A549 (cell line): ENCODE measurements at regions of chr15 and their contacts with region 1.

Region 1: DNA sequence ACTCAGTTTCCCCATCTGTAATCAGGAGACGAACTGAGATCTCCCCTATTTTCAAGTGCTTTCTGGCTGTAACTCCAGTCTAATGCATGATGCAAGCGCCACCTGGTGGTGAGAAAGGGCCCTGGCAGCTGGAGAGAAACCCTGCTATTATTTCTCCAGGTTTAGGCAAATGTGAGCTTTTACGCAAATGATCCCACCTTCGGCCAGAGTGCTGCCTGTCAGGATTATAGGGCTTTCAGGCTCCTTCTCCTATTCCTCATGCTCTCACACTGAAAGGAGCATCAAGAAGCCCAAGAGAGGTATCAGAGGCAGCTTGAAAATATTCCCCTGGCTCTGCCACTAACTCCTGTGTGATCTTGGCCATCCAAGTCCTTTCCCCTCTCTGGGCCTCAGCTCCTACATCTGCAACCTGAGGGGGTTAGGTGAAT is 93.9 kb upstream of the RASGRF1 start:
- DNase-seq: peak; percentile 68 to 76
- ATAC-seq: peak; percentile 88 to 91
- H3K4me3 ChIP-seq: no peak overlapping the region
- H3K27ac ChIP-seq: no peak overlapping the region
- H3K4me1 ChIP-seq: peaks cover 2% of the 10 kb centered on the region
- CTCF ChIP-seq: peak; percentile 99
- EP300 ChIP-seq: no peak
- POLR2A ChIP-seq: no peak
- RAD21 ChIP-seq: peak; percentile 96 to 99

Region 2: DNA sequence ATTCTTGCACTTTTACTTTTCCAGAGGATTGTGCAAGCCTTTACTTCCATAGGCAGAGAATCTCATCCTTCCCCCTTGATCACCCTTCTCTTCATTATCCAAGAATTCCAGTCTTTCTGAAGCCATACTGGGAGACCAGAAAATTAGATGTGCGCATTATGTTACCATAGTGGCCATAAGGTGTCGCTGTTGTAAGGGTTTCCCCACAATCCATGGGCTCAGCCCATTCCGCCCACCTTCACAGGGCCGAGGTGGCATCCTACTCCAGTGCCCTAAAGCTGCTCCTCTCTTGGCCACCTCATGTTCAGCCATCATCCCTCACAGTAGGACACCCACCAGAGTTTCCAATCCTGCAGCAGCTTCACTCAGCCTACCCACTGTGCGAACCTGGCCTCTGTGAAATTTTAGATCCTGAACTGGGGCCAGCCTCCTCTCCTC is 274.7 kb before region 1 on chr15:
- CTCF ChIA-PET with region 1: interaction called, 150 read pairs
- POLR2A ChIA-PET with region 1: no interaction called
- DNase-seq: peak; percentile 63 to 72
- ATAC-seq: peak; percentile 63 to 83
- H3K4me3 ChIP-seq: no peak overlapping the region
- H3K27ac ChIP-seq: no peak overlapping the region
- H3K4me1 ChIP-seq: peaks cover 21% of the 10 kb centered on the region
- CTCF ChIP-seq: peak; percentile 87
- EP300 ChIP-seq: no peak
- POLR2A ChIP-seq: no peak
- RAD21 ChIP-seq: peak; percentile 75 to 81

Region 3: GRCh38 chr15:78979456-78980320 is 204.8 kb before region 1 on chr15:
- CTCF ChIA-PET with region 1: interaction called, 25 read pairs
- POLR2A ChIA-PET with region 1: no interaction called
- DNase-seq: peak; percentile 92 to 93
- ATAC-seq: peak; percentile 80 to 94
- H3K4me3 ChIP-seq: no peak overlapping the region
- H3K27ac ChIP-seq: peak overlapping the region; percentile 59 to 80
- H3K4me1 ChIP-seq: peaks cover 5% of the 10 kb centered on the region; the same call in 2 of the 3 replicates
- CTCF ChIP-seq: peak; percentile 90
- EP300 ChIP-seq: no peak
- POLR2A ChIP-seq: no peak
- RAD21 ChIP-seq: peak; percentile 78 to 81

Region 4: GRCh38 chr15:79028411-79028964 is 156.0 kb before region 1 on chr15:
- CTCF ChIA-PET with region 1: interaction called, 518 read pairs
- POLR2A ChIA-PET with region 1: interaction called, 5 read pairs
- DNase-seq: peak; percentile 51 to 54
- ATAC-seq: peak in 1 of 2 experiments; percentile 77; a peak in 3 of 6 replicates
- H3K4me3 ChIP-seq: no peak overlapping the region
- H3K27ac ChIP-seq: no peak overlapping the region
- H3K4me1 ChIP-seq: no peaks in the 10 kb centered on the region
- CTCF ChIP-seq: peak; percentile 92
- EP300 ChIP-seq: no peak
- POLR2A ChIP-seq: no peak
- RAD21 ChIP-seq: peak; percentile 92 to 98

Region 5: DNA sequence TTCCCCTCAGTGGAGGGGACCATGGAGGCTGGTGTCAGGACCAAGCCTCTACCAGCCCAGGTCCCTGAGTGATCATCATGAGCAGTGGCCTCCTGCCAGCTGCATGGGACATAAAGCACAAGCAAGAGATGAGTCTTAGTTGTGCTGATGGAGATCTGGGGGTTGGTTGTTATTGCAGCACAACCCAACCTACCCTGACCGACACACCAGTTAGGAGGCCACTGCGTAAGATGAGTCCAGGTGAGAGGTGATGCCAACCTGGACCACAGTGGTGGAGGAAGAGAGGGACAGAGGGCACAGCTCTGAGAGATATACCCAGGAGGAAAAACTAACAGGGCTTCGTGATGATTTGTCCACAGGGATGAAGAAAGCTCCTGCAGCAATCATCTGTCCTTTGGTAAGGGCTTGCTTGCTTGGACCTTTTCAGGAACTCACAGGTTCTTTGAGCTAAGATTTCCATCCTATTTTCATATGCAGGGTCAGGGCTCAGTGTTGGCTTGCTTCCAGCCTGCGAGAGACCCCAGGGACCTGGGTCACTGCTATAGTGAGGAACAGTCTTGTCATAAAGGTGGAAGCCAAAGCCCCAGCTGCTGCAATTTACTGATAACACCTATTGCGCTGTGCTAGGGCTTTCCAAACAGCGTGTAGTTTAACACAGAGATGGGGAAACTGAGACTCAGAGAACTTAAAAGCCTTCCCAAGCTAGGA is 102.0 kb before region 1 on chr15:
- CTCF ChIA-PET with region 1: interaction called, 18 read pairs
- POLR2A ChIA-PET with region 1: no interaction called
- DNase-seq: no peak
- ATAC-seq: no peak
- H3K4me3 ChIP-seq: no peak overlapping the region
- H3K27ac ChIP-seq: no peak overlapping the region
- H3K4me1 ChIP-seq: no peaks in the 10 kb centered on the region
- CTCF ChIP-seq: no peak
- EP300 ChIP-seq: no peak
- POLR2A ChIP-seq: no peak
- RAD21 ChIP-seq: no peak

Region 6: DNA sequence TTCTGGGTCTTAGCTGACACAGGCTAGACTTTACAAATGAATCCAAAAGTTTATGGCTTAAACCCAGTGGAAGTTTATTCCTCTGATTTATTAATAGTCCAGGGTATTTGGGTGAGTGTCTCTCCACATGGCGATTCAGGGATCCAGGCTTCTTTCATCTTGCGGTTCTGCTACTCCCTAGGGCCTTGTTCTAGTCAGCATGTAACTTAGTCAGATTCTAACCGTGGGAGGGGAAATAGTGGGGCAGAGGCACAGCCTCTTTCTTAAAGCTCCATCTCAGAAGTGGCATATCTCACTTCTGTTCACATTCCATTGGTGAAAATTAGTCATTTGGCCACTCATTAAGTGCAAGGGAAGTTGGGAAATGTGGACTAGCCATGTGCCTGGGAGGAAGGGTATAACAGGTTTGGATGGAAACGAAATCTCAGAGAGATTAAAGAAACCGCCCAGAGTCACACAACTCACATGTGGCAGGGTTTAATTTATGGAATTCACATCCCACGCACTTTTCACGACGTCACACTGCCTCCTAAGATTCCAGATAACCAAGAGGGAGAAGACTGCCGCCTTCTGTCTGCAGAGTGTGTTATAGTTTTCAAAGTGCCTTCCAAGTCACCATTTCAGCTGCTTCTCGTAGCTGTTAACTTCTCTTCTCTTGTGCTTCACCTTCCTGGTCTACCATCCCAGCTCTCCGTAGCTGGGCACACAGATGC is 82.5 kb before region 1 on chr15:
- CTCF ChIA-PET with region 1: interaction called, 14 read pairs
- POLR2A ChIA-PET with region 1: no interaction called
- DNase-seq: no peak
- ATAC-seq: peak in 1 of 2 experiments; percentile 56; a peak in 3 of 6 replicates
- H3K4me3 ChIP-seq: no peak overlapping the region
- H3K27ac ChIP-seq: no peak overlapping the region
- H3K4me1 ChIP-seq: no peaks in the 10 kb centered on the region
- CTCF ChIP-seq: no peak
- EP300 ChIP-seq: no peak
- POLR2A ChIP-seq: no peak
- RAD21 ChIP-seq: 0 out of 5 replicates have a peak, but pooled peaks of 1 of the 2 experiments have one; percentile 18

Region 7: DNA sequence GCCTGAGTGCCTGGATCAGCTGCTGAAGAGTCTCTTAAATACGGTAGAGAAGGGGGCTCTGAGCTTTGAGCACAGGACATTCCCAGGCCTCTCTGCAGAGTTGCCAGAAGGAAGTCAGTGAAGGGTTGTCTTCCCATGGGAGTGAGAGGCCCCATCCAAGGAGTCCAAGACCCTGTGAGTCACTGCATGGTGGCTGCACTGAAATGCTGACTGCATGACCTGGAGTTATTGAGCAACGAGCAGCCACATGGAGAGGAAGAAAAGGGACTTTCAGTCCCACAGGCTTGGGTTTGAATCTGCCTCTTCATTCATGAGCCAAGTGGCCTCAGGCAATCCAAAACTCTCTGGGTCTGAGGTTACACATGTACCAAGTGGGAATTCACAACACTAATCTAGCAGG is 24.3 kb before region 1 on chr15:
- CTCF ChIA-PET with region 1: interaction called, 23 read pairs
- POLR2A ChIA-PET with region 1: no interaction called
- DNase-seq: no peak
- ATAC-seq: no peak
- H3K4me3 ChIP-seq: no peak overlapping the region
- H3K27ac ChIP-seq: no peak overlapping the region
- H3K4me1 ChIP-seq: no peaks in the 10 kb centered on the region
- CTCF ChIP-seq: no peak
- EP300 ChIP-seq: no peak
- POLR2A ChIP-seq: no peak
- RAD21 ChIP-seq: no peak